ENCODE measurements at regions of chr6 and their contacts with region 1.

Region 1: DNA sequence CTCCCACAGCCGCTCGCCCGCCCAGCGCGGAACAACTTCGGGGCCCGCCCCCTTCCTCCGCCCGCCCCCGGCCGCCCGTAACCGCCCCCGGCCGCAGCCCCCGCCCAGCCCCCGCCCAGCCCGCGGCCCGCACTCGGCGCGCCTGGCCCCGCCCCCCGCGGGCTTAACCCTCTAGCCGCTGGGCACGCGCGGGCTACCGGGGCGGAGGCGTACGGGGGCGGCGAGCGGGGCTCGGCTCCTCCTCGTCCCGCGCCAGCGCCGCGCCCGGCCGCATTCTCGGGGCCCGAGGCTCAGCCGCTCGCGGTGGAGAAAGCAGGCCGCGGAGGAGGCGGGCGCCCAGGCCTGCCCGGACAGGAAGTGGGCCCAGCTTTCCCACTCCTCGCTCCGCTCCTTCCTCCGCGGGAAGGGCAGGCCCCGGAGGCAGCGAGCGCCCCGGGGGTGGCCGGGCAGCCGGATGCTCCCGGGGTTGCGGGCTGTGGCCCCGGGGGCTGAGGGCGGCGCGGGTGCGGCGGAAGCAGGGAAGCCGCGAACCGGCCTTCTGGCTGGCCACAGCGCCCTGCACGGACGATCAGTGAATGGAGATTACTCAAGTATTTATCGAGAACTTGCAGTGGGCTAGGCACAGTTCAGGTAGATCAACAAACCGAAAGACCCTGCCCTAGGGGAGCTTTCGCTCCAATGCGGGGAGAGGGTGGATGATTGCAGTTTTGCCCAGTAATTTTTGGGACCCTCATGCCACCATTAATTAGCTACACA is at the start of gene TRAM2:
- DNase-seq: no peak
- H3K4me3 ChIP-seq: peak within 1 kb of the TSS; percentile 91
- H3K27me3 ChIP-seq: no peaks in the 10 kb centered on the region
- CTCF ChIP-seq: 0 out of 2 replicates have a peak, but pooled peaks have one; percentile 9
- polyA plus RNA-seq, gene TRAM2: 134 and 146 TPM in 2 replicates

Region 2: DNA sequence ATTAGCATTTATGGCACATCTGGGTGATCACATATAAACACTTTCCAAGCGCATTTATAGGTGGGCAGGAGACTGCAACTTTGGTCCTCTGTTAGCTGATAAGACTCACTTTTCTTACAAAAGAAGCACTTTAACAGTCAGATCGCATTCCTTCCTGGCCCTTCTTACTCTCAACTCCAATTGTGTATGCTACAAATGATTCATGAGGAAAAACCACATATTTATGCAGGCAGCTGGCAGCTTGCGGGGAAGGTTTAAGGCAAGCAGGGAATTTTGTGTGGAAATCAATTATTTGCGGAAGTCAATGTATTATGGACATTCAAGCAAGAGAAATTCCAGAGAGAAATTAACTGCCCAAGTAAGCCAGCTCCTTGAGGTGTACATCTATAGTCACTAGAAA is 683.8 kb before region 1 on chr6:
- CTCF ChIA-PET with region 1: no interaction called
- POLR2A ChIA-PET with region 1: no interaction called
- DNase-seq: no peak
- H3K4me3 ChIP-seq: no peak overlapping the region
- H3K27me3 ChIP-seq: no peaks in the 10 kb centered on the region
- CTCF ChIP-seq: no peak

Region 3: GRCh38 chr6:52543729-52544601 is 33.2 kb before region 1 on chr6:
- CTCF ChIA-PET with region 1: interaction called, 20 read pairs
- POLR2A ChIA-PET with region 1: interaction called, 4 read pairs
- DNase-seq: no peak
- H3K4me3 ChIP-seq: no peak overlapping the region
- H3K27me3 ChIP-seq: no peaks in the 10 kb centered on the region
- CTCF ChIP-seq: no peak

Region 4: DNA sequence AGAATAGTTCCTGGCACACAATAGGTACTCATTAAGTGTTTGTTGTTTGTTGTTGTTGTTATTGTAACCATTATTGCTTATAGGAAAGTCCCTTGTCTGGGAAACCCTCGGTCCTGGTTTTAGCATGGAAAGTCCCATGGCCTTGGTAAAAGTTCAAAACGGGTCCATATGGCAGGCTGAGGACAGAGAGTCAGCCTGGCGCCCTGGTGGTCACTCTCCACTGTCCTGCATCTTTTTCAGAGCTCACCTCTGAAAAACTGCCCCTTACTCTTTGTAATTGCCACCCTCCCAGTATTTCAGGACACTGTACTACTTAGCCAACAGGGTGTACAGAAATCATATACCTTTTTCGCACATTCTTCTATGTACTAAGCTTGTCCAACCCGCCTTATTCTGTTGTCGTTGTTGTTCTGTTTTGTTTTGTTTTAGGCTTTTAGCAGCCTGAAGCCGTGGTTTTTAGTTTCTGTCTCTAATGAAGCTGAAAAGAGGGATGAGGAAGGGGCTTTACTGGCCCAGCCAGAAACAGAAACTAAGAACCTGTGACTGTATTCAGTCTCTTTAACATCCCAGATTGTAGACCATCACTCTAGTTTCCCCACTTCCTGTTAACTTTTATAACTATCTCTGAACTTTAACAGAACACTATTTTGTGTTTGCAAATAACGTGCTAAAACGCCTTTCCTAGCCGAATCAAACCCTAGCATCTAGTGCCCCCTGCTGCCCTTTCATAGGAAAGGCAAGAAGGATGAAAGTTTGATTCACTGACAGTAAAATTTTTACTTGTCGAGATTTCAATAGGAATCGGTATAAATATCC is 86.1 kb after region 1 on chr6:
- CTCF ChIA-PET with region 1: interaction called, 16 read pairs
- POLR2A ChIA-PET with region 1: no interaction called
- DNase-seq: peak; percentile 29
- H3K4me3 ChIP-seq: peak overlapping the region; percentile 82
- H3K27me3 ChIP-seq: no peaks in the 10 kb centered on the region
- CTCF ChIP-seq: peak; percentile 76

Measured in BJ (cell line).